ENCODE measurements at regions of chr1 and their contacts with region 1.

Region 1: DNA sequence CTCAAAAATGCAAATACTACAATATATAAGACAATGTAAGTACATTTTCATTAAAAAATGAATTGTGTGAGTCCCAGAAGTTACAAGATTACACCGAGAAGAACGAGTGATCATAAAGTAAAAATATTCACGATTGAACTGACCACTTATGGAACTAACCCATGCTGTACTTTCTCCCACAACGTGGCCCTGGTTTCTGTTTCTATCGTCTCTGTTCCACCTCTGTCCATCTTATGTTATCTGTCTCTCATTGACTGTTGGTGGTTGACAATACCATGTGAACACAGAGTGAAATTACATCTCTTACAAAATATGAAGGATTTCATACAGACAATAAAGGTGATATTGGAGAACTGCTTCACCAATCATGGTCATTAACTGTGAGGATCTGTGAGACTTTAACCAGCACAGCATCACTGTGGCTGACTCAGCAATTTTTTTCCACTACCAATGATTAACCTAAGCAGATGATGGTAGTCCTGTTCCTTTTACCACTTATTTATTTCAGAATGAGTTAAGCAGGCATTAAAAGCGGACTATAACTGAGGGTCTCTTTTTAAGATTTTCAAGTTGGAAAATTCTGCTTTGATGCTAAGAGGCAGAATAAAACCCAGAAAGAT is 165.1 kb downstream of the TGFB2 start:
- DNase-seq: no peak
- H3K4me3 ChIP-seq: no peak overlapping the region
- H3K27ac ChIP-seq: no peak overlapping the region
- H3K4me1 ChIP-seq: no peaks in the 10 kb centered on the region
- H3K27me3 ChIP-seq: no peaks in the 10 kb centered on the region
- CTCF ChIP-seq: no peak
- POLR2A ChIP-seq: no peak

Region 2: GRCh38 chr1:218361298-218362065 is 148.8 kb before region 1 on chr1:
- intact Hi-C with region 1: loop called (anchors 10 kb)
- DNase-seq: no peak
- H3K4me3 ChIP-seq: no peak overlapping the region
- H3K27ac ChIP-seq: no peak overlapping the region
- H3K4me1 ChIP-seq: peaks cover 0 to 21% (median 4%) of the 10 kb centered on the region in 3 donors
- H3K27me3 ChIP-seq: no peaks in the 10 kb centered on the region
- CTCF ChIP-seq: peak in 3 of 6 experiments; percentile 10 to 27 (median 20)
- POLR2A ChIP-seq: no peak

Measured in esophagus squamous epithelium (tissue), 5 donors.